HEK293T (cell line): ENCODE measurements at regions of chr16 and their contacts with region 1.

Region 1: GRCh38 chr16:8936421-8936820 is 27.3 kb downstream of the USP7 start:
- DNase-seq: peak; percentile 65

Region 2: DNA sequence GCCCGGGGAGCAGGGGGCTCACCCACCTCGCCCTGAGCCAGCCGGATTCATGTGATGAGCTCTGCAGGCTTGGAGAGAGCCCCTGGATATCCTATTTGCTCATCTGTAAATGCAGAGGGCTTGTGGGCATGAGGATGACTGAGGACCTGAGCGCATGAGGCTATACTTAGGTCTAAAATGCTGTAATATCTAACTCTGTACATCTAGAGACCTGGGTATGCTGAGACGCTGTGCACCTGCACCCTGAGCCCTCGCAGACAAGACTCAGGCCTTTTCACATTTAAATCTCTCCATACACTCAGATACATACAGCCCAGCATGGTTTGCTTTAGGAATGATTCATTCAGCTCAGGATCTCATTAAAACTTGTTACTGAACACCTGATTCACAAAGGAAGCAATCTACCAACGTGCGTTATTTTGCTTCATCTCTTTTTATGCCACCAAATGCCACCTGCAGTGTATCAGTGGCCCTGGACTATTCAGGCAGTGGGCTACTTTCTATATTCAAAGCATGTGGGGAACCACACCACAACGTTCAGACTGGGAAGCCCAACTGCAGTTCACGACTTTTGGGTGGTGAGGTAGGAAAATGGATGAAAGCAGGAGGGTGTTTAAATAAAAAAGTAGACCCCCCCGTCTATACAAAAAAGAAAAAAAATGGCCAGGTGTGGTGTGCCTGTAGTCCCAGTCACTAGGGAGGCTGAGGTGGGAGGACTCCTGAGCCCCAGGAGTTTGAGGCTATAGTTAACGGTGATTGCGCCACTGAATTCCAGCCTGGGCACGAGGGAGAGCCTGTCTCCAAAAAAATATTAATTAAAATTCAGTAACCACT is 15.2 kb after region 1 on chr16:
- CTCF ChIA-PET with region 1: interaction called, 28 read pairs
- POLR2A ChIA-PET with region 1: no interaction called
- DNase-seq: no peak

Region 3: GRCh38 chr16:9008601-9009260 is 72.3 kb after region 1 on chr16:
- CTCF ChIA-PET with region 1: interaction called, 18 read pairs
- POLR2A ChIA-PET with region 1: no interaction called
- DNase-seq: peak; percentile 88